HEK293T (cell line): ENCODE measurements at regions of chr13 and their contacts with region 1.

Region 1: DNA sequence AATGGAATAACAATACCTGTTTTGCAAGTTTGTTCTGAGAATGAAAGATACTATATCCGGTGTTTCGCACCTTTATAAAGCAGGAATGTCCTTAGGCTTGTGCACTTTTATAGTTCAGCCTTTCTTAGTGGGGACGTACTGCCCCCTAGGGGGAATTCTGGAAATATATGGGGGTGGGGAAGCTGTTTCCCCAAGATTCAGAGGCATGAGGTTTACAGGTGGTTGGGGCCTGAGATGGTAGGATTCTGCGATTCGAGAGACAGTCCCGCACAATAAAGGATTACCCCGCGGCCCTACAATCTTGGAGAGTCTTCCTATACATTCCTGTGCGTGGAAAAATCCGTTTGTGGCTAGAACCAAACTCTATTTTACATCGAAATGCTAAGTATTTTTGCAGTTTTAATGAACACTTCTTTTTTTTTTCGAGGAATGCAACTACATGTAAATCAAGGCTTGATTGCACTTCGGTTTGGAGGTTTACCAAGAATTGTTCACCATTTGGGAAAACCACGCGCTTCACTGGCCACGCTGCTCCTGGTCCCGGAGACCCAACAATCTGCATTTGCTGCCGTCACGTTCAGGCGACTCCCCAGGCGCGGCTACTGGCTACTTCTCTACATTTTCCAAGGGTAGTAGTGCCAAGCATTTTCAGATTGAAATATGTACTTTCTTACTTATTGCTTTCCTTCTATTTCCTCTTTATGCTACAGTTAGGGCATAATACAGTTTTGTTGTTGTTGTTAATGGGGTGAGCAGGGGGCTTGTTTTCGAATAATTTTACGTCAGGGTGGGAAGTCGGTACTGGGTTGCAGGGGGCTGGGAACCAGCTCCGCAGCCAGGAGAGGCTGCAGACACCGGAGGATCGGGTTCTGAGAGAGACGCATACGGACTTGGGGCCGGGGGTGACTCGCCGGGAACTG is 830 bp downstream of the NEK5 start:
- DNase-seq: peak; percentile 70

Region 2: GRCh38 chr13:51895906-51896888 is 231.8 kb before region 1 on chr13:
- CTCF ChIA-PET with region 1: interaction called, 10 read pairs
- POLR2A ChIA-PET with region 1: no interaction called
- DNase-seq: peak; percentile 70